ENCODE measurements at regions of chr12 and their contacts with region 1.

Region 1: DNA sequence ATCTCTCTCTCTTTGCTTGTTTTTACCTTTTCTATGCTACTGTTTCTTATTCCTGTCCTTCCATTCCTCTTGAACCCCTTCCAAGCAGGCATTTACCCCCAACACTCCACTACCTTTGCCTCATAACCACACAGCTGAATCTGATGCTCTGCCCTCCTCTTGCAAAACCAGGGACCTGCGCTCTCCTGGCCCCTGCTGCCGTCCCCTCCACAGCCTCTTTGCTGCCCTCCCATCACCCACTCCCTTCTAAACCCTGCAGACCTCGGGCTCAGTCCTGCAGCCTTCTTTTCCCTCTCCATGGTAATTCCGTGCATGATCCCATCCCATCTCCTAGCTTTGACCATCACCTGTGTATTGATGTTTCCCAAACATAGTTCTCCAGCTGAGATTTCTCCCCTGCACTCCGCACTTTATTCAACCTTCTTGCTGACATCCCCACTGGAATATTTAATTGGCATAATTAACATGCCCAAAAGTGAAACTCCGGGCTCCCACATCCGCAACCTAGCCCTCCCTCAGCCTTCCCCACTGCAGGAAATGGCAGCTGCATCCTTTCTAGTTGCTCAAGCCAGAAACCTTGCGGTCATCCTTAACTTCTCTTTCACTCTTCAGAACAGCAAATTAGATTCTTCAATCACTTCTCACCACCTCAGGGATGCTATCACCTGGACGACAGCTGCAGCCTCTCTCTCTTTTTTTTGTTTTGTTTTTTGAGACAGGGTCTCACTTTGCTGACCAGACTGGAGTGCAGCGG is 16.0 kb downstream of the FIGNL2 start:
- DNase-seq: no peak
- H3K4me3 ChIP-seq: no peak overlapping the region
- H3K27ac ChIP-seq: no peak overlapping the region
- H3K4me1 ChIP-seq: peaks cover 19 to 58% (median 36%) of the 10 kb centered on the region in 4 experiments
- H3K27me3 ChIP-seq: peaks cover 0 to 3% (median 0%) of the 10 kb centered on the region in 4 experiments; a peak in 1 of 7 replicates
- CTCF ChIP-seq: no peak
- EP300 ChIP-seq: no peak
- POLR2A ChIP-seq: no peak
- RAD21 ChIP-seq: no peak

Region 2: DNA sequence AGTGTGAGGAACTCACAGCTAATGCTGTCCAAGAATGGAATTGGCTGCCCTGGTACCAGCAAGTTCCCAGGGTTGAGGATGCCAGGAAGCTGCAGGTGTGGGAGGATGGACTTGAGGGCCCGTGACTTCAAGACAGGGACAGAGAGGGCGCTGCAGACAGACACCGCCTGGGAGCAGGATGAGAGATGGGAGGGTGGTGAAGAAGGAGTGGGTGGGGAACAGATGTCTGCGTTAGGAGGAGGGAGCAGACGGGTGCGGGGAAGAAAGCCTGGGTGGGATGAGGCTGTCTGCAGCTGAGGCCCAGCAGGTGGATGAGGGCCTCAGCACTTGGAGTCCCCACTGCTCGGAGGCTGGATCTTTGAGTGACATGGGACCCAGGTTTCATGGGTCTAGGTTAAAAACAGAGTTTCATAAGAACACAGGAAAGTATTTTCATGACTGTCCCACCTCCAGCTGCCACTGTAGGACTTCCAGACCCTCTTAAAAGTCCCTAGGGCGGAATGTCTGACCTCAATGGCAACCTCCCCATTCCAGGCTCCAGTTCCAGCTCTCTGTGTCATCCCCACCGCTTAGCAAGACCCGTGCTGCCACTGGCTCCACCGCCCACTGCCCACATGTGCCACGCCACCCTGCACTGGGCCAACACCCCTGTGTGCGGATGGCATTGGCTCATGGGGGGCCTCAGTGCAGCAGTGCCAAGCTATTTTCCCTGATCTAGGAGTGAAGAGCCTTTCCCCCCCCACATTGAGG is 311.8 kb before region 1 on chr12:
- CTCF ChIA-PET with region 1: no interaction called
- POLR2A ChIA-PET with region 1: no interaction called
- DNase-seq: peak in 1 of 2 experiments; percentile 52
- H3K4me3 ChIP-seq: no peak overlapping the region
- H3K27ac ChIP-seq: no peak overlapping the region
- H3K4me1 ChIP-seq: no peaks in the 10 kb centered on the region
- H3K27me3 ChIP-seq: no peaks in the 10 kb centered on the region; a peak in 2 of 7 replicates
- CTCF ChIP-seq: peak; percentile 55 to 82 (median 73)
- EP300 ChIP-seq: no peak
- POLR2A ChIP-seq: no peak
- RAD21 ChIP-seq: peak; percentile 58 to 62

Region 3: GRCh38 chr12:51846911-51847642 is 14.5 kb after region 1 on chr12:
- CTCF ChIA-PET with region 1: interaction called, 13 read pairs
- POLR2A ChIA-PET with region 1: interaction called, 14 read pairs
- DNase-seq: peak in 1 of 2 experiments; percentile 81
- H3K4me3 ChIP-seq: peak overlapping the region; percentile 61 to 91 (median 76)
- H3K27ac ChIP-seq: no peak overlapping the region
- H3K4me1 ChIP-seq: peaks cover 12 to 33% (median 24%) of the 10 kb centered on the region in 4 experiments
- H3K27me3 ChIP-seq: peaks cover 6 to 31% (median 31%) of the 10 kb centered on the region in 4 experiments
- CTCF ChIP-seq: no peak
- EP300 ChIP-seq: no peak
- POLR2A ChIP-seq: no peak
- RAD21 ChIP-seq: no peak

Measured in H1 (cell line).